PC-3 (cell line): ENCODE measurements at regions of chr6 and their contacts with region 1.

Region 1: GRCh38 chr6:129317931-129318820 is 391.8 kb downstream of the ARHGAP18 start:
- DNase-seq: peak; percentile 87
- ATAC-seq: peak; percentile 97
- H3K4me3 ChIP-seq: no peak overlapping the region; the same call in 1 of the 2 replicates
- H3K27ac ChIP-seq: peak overlapping the region; percentile 50
- H3K4me1 ChIP-seq: peaks cover 33% of the 10 kb centered on the region
- H3K27me3 ChIP-seq: no peaks in the 10 kb centered on the region
- CTCF ChIP-seq: no peak

Region 2: GRCh38 chr6:129340983-129341382 is 22.8 kb after region 1 on chr6:
- CTCF ChIA-PET with region 1: no interaction called
- POLR2A ChIA-PET with region 1: no interaction called
- intact Hi-C with region 1: loop called (anchors 2 kb)
- DNase-seq: peak; percentile 72
- ATAC-seq: peak; percentile 27; the same call in 1 of the 2 replicates
- H3K4me3 ChIP-seq: no peak overlapping the region
- H3K27ac ChIP-seq: no peak overlapping the region
- H3K4me1 ChIP-seq: peaks cover 19% of the 10 kb centered on the region
- H3K27me3 ChIP-seq: no peaks in the 10 kb centered on the region
- CTCF ChIP-seq: no peak

Region 3: GRCh38 chr6:129490521-129491245 is 172.5 kb after region 1 on chr6:
- CTCF ChIA-PET with region 1: no interaction called
- POLR2A ChIA-PET with region 1: no interaction called
- intact Hi-C with region 1: loop called (anchors 2 kb)
- DNase-seq: peak; percentile 95
- ATAC-seq: peak; percentile 82
- H3K4me3 ChIP-seq: peak overlapping the region; percentile 68
- H3K27ac ChIP-seq: peak overlapping the region; percentile 100
- H3K4me1 ChIP-seq: peaks cover 56% of the 10 kb centered on the region
- H3K27me3 ChIP-seq: no peaks in the 10 kb centered on the region
- CTCF ChIP-seq: no peak

Region 4: DNA sequence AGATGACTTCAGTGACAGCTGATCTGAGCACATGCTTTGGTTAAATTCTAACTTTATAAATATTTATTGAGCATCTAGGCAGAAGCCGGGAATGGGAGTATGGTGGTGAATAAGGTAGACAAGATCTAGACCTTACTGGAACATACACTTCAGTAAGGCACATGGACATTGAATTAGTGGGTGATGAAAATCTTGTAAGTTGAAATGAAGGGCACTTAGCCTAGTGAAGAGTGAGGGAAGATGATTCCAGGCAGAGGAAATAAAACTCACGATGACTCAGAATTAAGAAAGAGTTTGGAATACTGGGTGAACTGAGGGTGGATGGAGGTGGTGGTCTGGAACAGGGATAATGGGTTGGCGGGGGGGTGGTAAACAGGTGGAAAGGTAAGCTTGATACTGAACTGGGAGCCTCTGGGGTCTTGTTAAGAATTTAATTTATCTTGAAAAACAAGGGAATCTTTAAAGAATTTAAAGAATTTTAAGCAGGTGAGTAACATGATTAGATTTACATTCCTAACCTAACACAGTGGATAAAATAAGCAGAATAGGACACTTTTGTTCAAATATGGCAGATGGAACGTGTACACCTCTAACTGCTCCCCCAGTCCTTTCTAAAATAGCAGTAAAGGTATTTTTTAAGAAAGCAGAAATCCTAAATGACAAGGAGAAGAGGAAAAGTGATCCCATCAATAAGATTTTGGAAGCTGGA is 467.0 kb after region 1 on chr6:
- CTCF ChIA-PET with region 1: no interaction called
- POLR2A ChIA-PET with region 1: no interaction called
- intact Hi-C with region 1: no loop called
- DNase-seq: peak; percentile 20
- ATAC-seq: peak; percentile 49
- H3K4me3 ChIP-seq: no peak overlapping the region
- H3K27ac ChIP-seq: no peak overlapping the region
- H3K4me1 ChIP-seq: peaks cover 7% of the 10 kb centered on the region; the same call in 1 of the 2 replicates
- H3K27me3 ChIP-seq: no peaks in the 10 kb centered on the region
- CTCF ChIP-seq: no peak